Tibial artery (tissue), 4 donors: ENCODE measurements at regions of chr16 and their contacts with region 1.

Region 1: GRCh38 chr16:57300387-57301125 is 16.1 kb upstream of the PLLP start:
- DNase-seq: peak; percentile 100
- H3K4me3 ChIP-seq: peak overlapping the region; percentile 50 to 55
- H3K27ac ChIP-seq: peak overlapping the region; percentile 89
- H3K4me1 ChIP-seq: peaks cover 0 to 40% (median 26%) of the 10 kb centered on the region in 4 donors
- H3K27me3 ChIP-seq: no peaks in the 10 kb centered on the region
- CTCF ChIP-seq: peak; percentile 99 to 100

Region 2: GRCh38 chr16:57235128-57236021 is 65.2 kb before region 1 on chr16:
- intact Hi-C with region 1: no loop called
- DNase-seq: no peak
- H3K4me3 ChIP-seq: no peak overlapping the region
- H3K27ac ChIP-seq: no peak overlapping the region
- H3K4me1 ChIP-seq: no peaks in the 10 kb centered on the region
- H3K27me3 ChIP-seq: no peaks in the 10 kb centered on the region
- CTCF ChIP-seq: no peak

Region 3: GRCh38 chr16:57372372-57373116 is 72.0 kb after region 1 on chr16 and contains the start of gene CX3CL1:
- intact Hi-C with region 1: loop called (anchors 2 kb)
- DNase-seq: peak; percentile 85 to 96
- H3K4me3 ChIP-seq: peak within 1 kb of the TSS; percentile 65 to 78
- H3K27ac ChIP-seq: peak within 1 kb of the TSS; percentile 90 to 96
- H3K4me1 ChIP-seq: peaks cover 0 to 49% (median 46%) of the 10 kb centered on the region in 4 donors
- H3K27me3 ChIP-seq: no peaks in the 10 kb centered on the region
- CTCF ChIP-seq: peak; percentile 30 to 38

Region 4: DNA sequence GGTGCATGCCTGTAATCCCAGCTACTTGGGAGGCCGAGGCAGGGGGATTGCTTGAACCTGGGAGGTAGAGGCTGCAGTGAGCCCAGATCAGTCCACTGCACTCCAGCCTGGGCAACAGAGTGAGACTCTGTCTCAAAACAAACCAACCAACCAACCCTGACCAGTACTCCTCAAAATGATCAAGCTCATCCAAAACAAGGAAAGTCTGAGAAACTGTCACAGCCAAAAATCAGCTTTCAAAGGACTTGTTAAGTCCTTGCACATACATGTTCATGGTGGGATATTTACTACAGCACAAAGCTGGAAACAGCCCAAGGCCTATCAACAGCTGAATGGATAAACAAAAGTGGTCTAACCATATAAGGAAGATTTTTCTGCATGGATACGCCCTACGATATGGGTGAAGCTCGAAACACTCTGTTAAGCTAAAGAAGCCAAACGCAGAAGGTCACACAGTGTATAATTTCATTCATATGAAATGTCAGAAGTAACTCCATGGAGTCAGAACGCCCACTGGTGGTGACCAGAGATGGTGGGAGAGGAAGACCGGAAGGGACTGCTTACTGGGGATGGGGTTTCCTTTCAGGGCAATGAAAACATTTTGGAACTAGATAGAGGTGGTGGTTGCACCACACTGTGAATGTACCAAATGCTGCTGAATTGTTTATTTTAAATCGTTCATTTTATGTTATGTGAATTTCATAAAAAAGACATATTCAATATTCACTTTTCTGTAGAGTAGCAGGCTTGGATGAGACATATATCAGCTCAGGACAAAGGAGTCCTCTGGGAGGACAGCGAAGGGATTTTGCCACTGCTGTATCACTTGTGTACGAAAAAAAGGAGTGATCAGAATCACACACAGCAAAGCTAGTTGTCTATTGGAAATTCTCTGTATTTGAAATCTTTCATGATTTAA is 121.7 kb after region 1 on chr16:
- intact Hi-C with region 1: loop called (anchors 1 kb)
- DNase-seq: peak; percentile 65 to 81
- H3K4me3 ChIP-seq: no peak overlapping the region
- H3K27ac ChIP-seq: peak overlapping the region; percentile 8 to 31
- H3K4me1 ChIP-seq: peaks cover 7 to 38% (median 22%) of the 10 kb centered on the region in 4 donors
- H3K27me3 ChIP-seq: no peaks in the 10 kb centered on the region
- CTCF ChIP-seq: peak; percentile 75 to 78

Region 5: GRCh38 chr16:57535680-57536305 is 235.2 kb after region 1 on chr16:
- intact Hi-C with region 1: loop called (anchors 10 kb)
- DNase-seq: peak; percentile 90 to 97
- H3K4me3 ChIP-seq: peak overlapping the region; percentile 78 to 89
- H3K27ac ChIP-seq: peak overlapping the region; percentile 86 to 91
- H3K4me1 ChIP-seq: peaks cover 0 to 52% (median 39%) of the 10 kb centered on the region in 4 donors
- H3K27me3 ChIP-seq: no peaks in the 10 kb centered on the region
- CTCF ChIP-seq: peak in 1 of 2 experiments; percentile 9

Region 6: DNA sequence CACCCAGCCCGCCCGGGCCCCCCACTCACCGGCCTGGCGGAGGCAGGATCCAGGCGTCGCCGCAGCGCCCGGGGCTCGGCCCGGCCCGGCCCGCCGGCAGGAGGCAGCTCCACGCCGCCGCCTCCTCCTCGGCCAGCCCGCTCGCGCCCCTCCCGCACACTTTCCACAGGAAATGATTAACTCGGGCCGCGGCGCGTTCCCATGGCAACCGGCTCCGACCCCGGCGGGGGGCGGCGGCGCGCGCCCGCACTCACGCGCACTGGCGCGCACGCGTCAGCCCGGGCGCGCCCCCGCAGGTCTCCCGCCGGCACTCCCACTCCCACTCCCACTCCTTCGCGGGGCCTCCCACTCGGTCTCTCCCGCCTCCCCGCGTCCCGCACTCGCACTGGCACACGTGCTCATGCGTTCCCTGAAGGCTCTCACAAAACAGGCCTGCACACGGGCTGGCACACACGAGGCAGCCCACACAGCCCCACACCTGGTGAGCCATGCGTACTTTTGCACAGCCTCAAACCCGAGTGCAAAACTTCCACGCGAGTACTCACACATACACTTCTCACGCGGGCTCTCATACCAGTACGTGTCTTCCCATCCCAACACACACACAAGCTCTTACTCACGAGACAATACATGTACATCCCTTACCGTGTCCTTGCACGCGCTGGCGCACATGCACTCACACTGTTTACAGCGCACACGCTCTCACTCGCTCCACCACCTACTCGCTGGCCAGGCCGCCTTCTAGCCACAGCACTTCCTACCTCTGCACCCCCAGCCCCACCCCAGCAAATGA is 502.0 kb after region 1 on chr16 and contains the start of gene KIFC3:
- intact Hi-C with region 1: loop called (anchors 10 kb)
- DNase-seq: peak; percentile 82 to 92
- H3K4me3 ChIP-seq: peak within 1 kb of the TSS; percentile 60 to 73
- H3K27ac ChIP-seq: peak within 1 kb of the TSS; percentile 72 to 83
- H3K4me1 ChIP-seq: peaks cover 0 to 44% (median 32%) of the 10 kb centered on the region in 4 donors
- H3K27me3 ChIP-seq: no peaks in the 10 kb centered on the region
- CTCF ChIP-seq: peak; percentile 27 to 47